ENCODE measurements at regions of chr9 and their contacts with region 1.

Region 1: GRCh38 chr9:111896353-111896958 is at the start of gene UGCG:
- DNase-seq: peak; percentile 92
- H3K4me3 ChIP-seq: peak within 1 kb of the TSS; percentile 81 to 96 (median 90)
- H3K27ac ChIP-seq: peak within 1 kb of the TSS; percentile 82
- H3K4me1 ChIP-seq: peaks cover 23% of the 10 kb centered on the region
- H3K27me3 ChIP-seq: no peaks in the 10 kb centered on the region
- CTCF ChIP-seq: no peak
- POLR2A ChIP-seq: peak; percentile 95
- total RNA-seq, gene UGCG: 29.9 and 38.5 TPM in 2 replicates

Region 2: DNA sequence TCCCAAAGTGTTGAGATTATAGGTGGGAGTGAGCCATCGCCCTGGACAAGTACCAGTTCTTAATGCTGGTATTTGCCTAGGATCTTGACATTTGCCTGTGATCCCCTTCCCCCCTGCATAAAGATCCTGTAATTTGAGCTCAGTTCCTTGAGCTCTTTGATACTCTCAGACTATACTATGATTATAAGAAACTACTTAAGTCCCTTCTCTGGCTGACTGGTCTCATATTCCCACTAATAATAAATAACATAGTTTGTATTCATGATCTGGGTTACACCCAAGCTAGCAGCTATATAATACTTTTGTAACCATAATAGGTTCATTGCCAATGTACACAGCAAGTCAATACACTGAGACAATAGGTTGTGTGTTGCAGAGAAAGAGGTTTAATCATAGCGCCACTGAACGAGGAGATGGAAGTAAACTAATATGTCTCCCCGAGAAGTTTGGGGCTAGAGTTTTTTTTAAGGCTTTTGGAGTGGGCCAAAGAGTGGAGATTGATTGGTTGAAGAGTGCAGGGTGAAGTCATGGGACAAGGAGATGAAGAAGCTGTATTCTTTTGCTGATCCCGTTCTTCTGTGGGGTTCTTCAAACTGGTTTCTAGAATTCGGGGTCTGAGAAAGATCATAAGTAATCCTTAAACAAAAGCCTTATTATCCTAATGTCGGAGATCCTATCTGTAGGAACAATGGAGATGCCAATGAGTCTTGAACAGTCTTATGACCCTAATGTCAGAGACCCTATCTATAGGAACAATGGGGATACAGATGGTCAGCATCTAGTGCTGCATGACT is 81.0 kb before region 1 on chr9:
- CTCF ChIA-PET with region 1: no interaction called
- POLR2A ChIA-PET with region 1: no interaction called
- dilution Hi-C with region 1: no loop called
- intact Hi-C with region 1: no loop called
- DNase-seq: peak; percentile 21
- H3K4me3 ChIP-seq: no peak overlapping the region
- H3K27ac ChIP-seq: no peak overlapping the region
- H3K4me1 ChIP-seq: no peaks in the 10 kb centered on the region
- H3K27me3 ChIP-seq: no peaks in the 10 kb centered on the region
- CTCF ChIP-seq: no peak
- POLR2A ChIP-seq: no peak

Region 3: GRCh38 chr9:111851566-111851965 is 44.9 kb before region 1 on chr9:
- CTCF ChIA-PET with region 1: no interaction called
- POLR2A ChIA-PET with region 1: no interaction called
- dilution Hi-C with region 1: no loop called
- intact Hi-C with region 1: loop called (anchors 2 kb)
- DNase-seq: no peak
- H3K4me3 ChIP-seq: no peak overlapping the region
- H3K27ac ChIP-seq: no peak overlapping the region
- H3K4me1 ChIP-seq: peaks cover 15% of the 10 kb centered on the region
- H3K27me3 ChIP-seq: no peaks in the 10 kb centered on the region
- CTCF ChIP-seq: no peak
- POLR2A ChIP-seq: no peak

Region 4: DNA sequence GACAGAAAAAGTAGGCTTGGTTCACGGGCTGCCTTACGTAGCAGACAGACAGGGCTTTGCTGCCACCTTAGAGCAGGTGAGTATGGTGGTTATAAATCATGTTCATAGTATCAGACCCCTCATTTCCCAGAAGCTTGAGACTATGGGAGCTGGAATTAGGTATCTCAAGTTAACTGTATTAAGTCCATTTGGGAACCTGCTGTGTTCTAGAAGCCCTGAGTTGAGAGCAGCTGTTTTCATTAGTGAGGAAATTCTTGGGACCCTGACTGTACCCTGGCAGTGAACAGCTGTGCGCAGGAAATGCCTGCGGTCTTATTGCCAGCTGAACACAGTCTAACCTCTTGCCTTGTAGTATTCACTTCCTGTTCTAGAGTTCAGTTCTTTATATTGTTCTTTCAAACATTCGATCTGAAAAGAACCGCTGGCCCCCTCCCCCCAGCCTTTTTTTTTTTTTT is 30.0 kb after region 1 on chr9:
- CTCF ChIA-PET with region 1: interaction called, 6 read pairs
- POLR2A ChIA-PET with region 1: interaction called, 10 read pairs
- dilution Hi-C with region 1: no loop called
- intact Hi-C with region 1: loop called (anchors 1 kb)
- DNase-seq: peak; percentile 95
- H3K4me3 ChIP-seq: no peak overlapping the region
- H3K27ac ChIP-seq: peak overlapping the region; percentile 99
- H3K4me1 ChIP-seq: peaks cover 39% of the 10 kb centered on the region
- H3K27me3 ChIP-seq: no peaks in the 10 kb centered on the region
- CTCF ChIP-seq: no peak
- POLR2A ChIP-seq: no peak

Region 5: GRCh38 chr9:112020680-112021596 is 124.5 kb after region 1 on chr9:
- CTCF ChIA-PET with region 1: interaction called, 8 read pairs
- POLR2A ChIA-PET with region 1: no interaction called
- dilution Hi-C with region 1: no loop called
- intact Hi-C with region 1: loop called (anchors 2 kb)
- DNase-seq: peak; percentile 74
- H3K4me3 ChIP-seq: no peak overlapping the region
- H3K27ac ChIP-seq: peak overlapping the region; percentile 64
- H3K4me1 ChIP-seq: peaks cover 24% of the 10 kb centered on the region
- H3K27me3 ChIP-seq: no peaks in the 10 kb centered on the region
- CTCF ChIP-seq: no peak
- POLR2A ChIP-seq: no peak

Region 6: GRCh38 chr9:112333639-112334431 is 437.4 kb after region 1 on chr9:
- CTCF ChIA-PET with region 1: no interaction called
- POLR2A ChIA-PET with region 1: no interaction called
- dilution Hi-C with region 1: no loop called
- intact Hi-C with region 1: loop called (anchors 1 kb)
- DNase-seq: peak; percentile 94
- H3K4me3 ChIP-seq: peak overlapping the region; percentile 71 to 95 (median 88)
- H3K27ac ChIP-seq: peak overlapping the region; percentile 87
- H3K4me1 ChIP-seq: peaks cover 18% of the 10 kb centered on the region
- H3K27me3 ChIP-seq: no peaks in the 10 kb centered on the region
- CTCF ChIP-seq: peak; percentile 26 to 51
- POLR2A ChIP-seq: no peak

Region 7: GRCh38 chr9:112489876-112490666 is 593.6 kb after region 1 on chr9:
- CTCF ChIA-PET with region 1: no interaction called
- POLR2A ChIA-PET with region 1: no interaction called
- dilution Hi-C with region 1: no loop called
- intact Hi-C with region 1: no loop called
- DNase-seq: no peak
- H3K4me3 ChIP-seq: no peak overlapping the region
- H3K27ac ChIP-seq: no peak overlapping the region
- H3K4me1 ChIP-seq: peaks cover 4% of the 10 kb centered on the region
- H3K27me3 ChIP-seq: no peaks in the 10 kb centered on the region
- CTCF ChIP-seq: no peak
- POLR2A ChIP-seq: no peak